ENCODE measurements at regions of chr4 and their contacts with region 1.

Region 1: GRCh38 chr4:156999175-156999516 is 27.5 kb upstream of the PDGFC start:
- DNase-seq: peak; percentile 10
- H3K4me3 ChIP-seq: no peak overlapping the region
- H3K27ac ChIP-seq: no peak overlapping the region
- H3K4me1 ChIP-seq: peaks cover 0 to 5% (median 2%) of the 10 kb centered on the region in 4 donors
- H3K27me3 ChIP-seq: no peaks in the 10 kb centered on the region
- CTCF ChIP-seq: no peak
- EP300 ChIP-seq: no peak
- POLR2A ChIP-seq: no peak

Region 2: DNA sequence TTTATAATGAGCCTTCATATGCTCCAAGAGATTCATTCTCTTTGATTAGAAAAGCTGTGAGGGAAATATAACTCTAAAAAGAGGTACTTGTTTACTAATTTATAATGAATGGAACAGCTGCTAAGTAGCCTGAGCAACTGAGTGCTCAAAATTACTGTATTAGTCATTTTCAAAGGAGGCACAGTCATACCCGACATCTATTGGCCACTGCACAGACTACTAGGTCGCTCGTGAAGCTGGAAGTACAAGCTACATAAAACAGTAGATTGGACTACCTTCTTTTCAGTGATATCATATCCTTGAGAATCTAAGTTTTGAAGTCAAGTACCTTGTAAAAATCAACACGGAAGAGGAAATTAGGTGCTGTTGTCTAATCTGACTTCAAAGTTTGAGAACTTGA is 24.8 kb after region 1 on chr4:
- in situ Hi-C with region 1: no loop called
- intact Hi-C with region 1: loop called (anchors 2 kb)
- DNase-seq: no peak
- H3K4me3 ChIP-seq: no peak overlapping the region
- H3K27ac ChIP-seq: no peak overlapping the region
- H3K4me1 ChIP-seq: no peaks in the 10 kb centered on the region
- H3K27me3 ChIP-seq: no peaks in the 10 kb centered on the region
- CTCF ChIP-seq: no peak
- EP300 ChIP-seq: no peak
- POLR2A ChIP-seq: no peak

Region 3: DNA sequence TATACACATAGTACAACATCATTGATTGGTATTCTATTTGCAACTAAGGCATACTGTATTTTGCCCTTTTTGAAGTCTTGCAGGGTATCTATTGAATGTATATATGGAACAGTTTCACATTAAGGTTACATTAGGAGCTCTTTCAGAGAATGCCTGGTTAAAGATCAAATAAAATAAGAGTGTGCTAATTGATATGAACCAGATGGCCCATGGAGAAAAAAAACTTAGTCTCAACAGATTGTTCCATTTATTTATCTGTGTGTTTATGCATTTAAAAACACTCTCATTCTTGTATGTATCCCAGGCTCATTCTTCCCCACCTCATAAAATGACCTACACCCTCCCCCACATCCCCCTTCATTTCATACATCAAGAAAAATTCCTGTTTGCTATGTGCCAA is 186.2 kb after region 1 on chr4:
- in situ Hi-C with region 1: no loop called
- intact Hi-C with region 1: no loop called
- DNase-seq: no peak
- H3K4me3 ChIP-seq: no peak overlapping the region
- H3K27ac ChIP-seq: no peak overlapping the region
- H3K4me1 ChIP-seq: no peaks in the 10 kb centered on the region
- H3K27me3 ChIP-seq: no peaks in the 10 kb centered on the region
- CTCF ChIP-seq: no peak
- EP300 ChIP-seq: no peak
- POLR2A ChIP-seq: no peak

Measured in transverse colon (tissue), 4 donors.